GM18951 (cell line): ENCODE measurements at regions of chr12 and their contacts with region 1.

Region 1: GRCh38 chr12:122726080-122726558 is 4.5 kb downstream of the HCAR1 start:
- POLR2A ChIP-seq: no peak

Region 2: DNA sequence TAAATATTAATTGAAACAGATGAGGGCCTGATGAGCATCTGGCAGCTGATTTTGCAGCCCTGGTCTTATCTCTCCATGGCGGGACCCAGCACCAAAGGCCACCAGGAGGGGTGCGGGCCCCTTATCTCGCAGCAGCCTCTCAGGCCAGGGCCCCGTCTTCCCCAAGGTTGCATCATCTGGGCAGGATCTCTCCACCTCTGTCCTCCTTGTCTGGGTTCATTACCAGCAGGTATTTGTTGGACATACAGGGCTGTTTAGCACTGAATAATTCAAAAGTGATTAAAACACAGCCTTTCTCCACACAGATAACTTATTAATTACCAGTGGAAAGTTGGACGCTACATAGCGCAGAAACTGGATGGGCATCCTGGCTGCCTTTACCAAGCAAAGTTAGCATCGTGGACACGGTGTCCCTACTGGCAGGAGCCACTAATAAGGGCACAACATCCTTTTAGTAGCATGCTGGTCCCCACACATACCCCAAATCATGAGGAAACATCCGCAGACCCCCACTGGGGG is 987.7 kb before region 1 on chr12:
- in situ Hi-C with region 1: no loop called
- POLR2A ChIP-seq: no peak

Region 3: GRCh38 chr12:122067966-122068365 is 658.2 kb before region 1 on chr12:
- in situ Hi-C with region 1: no loop called
- POLR2A ChIP-seq: no peak

Region 4: GRCh38 chr12:122646517-122647217 is 79.5 kb before region 1 on chr12:
- in situ Hi-C with region 1: loop called (anchors 25 kb)
- POLR2A ChIP-seq: no peak